Right ventricle myocardium inferior (tissue), 1 donor: ENCODE measurements at regions of chr17 and their contacts with region 1.

Region 1: GRCh38 chr17:72030067-72030899 is 90.5 kb upstream of the SOX9 start:
- DNase-seq: peak; percentile 51
- ATAC-seq: peak; percentile 69

Region 2: DNA sequence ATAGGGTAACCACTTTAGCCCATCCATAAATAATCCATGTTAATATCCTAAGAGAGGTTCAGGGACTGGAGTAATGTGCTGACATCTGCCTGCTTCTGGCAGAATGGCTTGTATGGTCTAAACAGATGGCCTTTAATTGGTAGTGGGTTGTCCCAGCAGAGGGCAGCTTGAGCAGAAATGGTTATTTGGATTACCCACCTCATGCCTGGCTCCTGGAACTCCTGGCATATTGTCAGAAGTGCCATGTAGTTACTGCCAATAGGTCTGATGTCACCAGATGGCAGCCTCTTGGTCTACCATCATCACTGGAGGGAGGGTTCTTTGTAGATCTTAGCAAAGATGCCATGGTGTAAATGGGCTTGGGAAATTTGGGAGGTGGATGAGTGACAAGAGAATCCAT is 66.9 kb before region 1 on chr17:
- intact Hi-C with region 1: no loop called
- DNase-seq: no peak
- ATAC-seq: no peak

Region 3: DNA sequence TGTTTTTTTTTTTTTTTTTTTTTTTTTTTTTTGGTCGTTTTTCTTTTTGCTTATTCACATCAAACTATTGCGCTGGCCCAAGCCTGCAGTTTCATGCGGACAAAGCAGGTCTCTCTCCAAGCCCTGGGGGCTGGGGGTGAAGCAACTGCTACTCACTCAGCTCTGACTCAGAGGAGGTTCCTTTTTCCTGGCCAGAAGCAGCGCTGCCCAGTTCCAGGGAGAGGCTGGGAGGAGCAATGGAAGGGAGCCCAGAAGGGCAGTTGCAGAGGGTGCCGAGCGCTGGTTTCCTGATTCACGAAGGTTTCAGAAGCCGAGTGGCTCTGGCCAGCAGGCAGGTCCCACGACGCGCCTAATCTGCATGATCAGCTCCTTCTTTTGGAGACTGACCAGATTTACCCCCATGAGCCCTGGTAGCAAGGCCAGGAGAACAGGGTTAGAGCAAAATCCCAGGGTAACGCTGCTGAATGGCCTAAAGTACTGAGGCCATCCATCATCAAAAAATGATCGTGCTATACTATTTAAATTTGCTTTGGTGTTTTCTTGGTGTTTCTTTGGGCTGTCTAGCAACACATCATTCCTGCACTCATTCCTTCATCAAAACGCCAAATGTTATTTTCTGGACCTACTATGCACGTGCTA is 54.2 kb before region 1 on chr17:
- intact Hi-C with region 1: loop called (anchors 10 kb)
- DNase-seq: peak; percentile 88
- ATAC-seq: peak; percentile 96